ENCODE measurements at regions of chr14 and their contacts with region 1.

Region 1: GRCh38 chr14:54566410-54567223 is at the start of gene SAMD4A:
- DNase-seq: peak; percentile 84
- H3K4me3 ChIP-seq: peak within 1 kb of the TSS; percentile 41 to 87 (median 75)
- H3K27ac ChIP-seq: peak within 1 kb of the TSS; percentile 80
- H3K4me1 ChIP-seq: peaks cover 38% of the 10 kb centered on the region
- H3K27me3 ChIP-seq: no peaks in the 10 kb centered on the region
- CTCF ChIP-seq: peak in 1 of 2 donors; percentile 34
- POLR2A ChIP-seq: no peak
- total RNA-seq, gene SAMD4A: 88.8 and 95.3 TPM in 2 replicates

Region 2: GRCh38 chr14:54366736-54367735 is 199.6 kb before region 1 on chr14:
- CTCF ChIA-PET with region 1: interaction called, 6 read pairs
- POLR2A ChIA-PET with region 1: no interaction called
- dilution Hi-C with region 1: no loop called
- intact Hi-C with region 1: loop called (anchors 2 kb)
- DNase-seq: peak; percentile 69
- H3K4me3 ChIP-seq: no peak overlapping the region
- H3K27ac ChIP-seq: no peak overlapping the region
- H3K4me1 ChIP-seq: peaks cover 38% of the 10 kb centered on the region
- H3K27me3 ChIP-seq: peaks cover 0 to 1% of the 10 kb centered on the region in 2 experiments
- CTCF ChIP-seq: peak; percentile 59 to 67
- POLR2A ChIP-seq: no peak

Region 3: GRCh38 chr14:54555651-54556050 is 11.0 kb before region 1 on chr14:
- CTCF ChIA-PET with region 1: interaction called, 10 read pairs
- POLR2A ChIA-PET with region 1: no interaction called
- dilution Hi-C with region 1: no loop called
- intact Hi-C with region 1: no loop called
- DNase-seq: no peak
- H3K4me3 ChIP-seq: no peak overlapping the region
- H3K27ac ChIP-seq: no peak overlapping the region
- H3K4me1 ChIP-seq: no peaks in the 10 kb centered on the region
- H3K27me3 ChIP-seq: peaks cover 2 to 3% of the 10 kb centered on the region in 2 experiments
- CTCF ChIP-seq: peak; percentile 5 to 6
- POLR2A ChIP-seq: no peak

Region 4: GRCh38 chr14:54617467-54617866 is 50.9 kb after region 1 on chr14:
- CTCF ChIA-PET with region 1: no interaction called
- POLR2A ChIA-PET with region 1: no interaction called
- dilution Hi-C with region 1: no loop called
- intact Hi-C with region 1: no loop called
- DNase-seq: no peak
- H3K4me3 ChIP-seq: no peak overlapping the region
- H3K27ac ChIP-seq: no peak overlapping the region
- H3K4me1 ChIP-seq: peaks cover 10% of the 10 kb centered on the region
- H3K27me3 ChIP-seq: no peaks in the 10 kb centered on the region
- CTCF ChIP-seq: no peak
- POLR2A ChIP-seq: no peak

Region 5: GRCh38 chr14:54652188-54652587 is 85.6 kb after region 1 on chr14:
- CTCF ChIA-PET with region 1: interaction called, 42 read pairs
- POLR2A ChIA-PET with region 1: interaction called, 24 read pairs
- dilution Hi-C with region 1: no loop called
- intact Hi-C with region 1: loop called (anchors 1 kb)
- DNase-seq: peak; percentile 96
- H3K4me3 ChIP-seq: peak overlapping the region; percentile 29 to 80 (median 30)
- H3K27ac ChIP-seq: peak overlapping the region; percentile 100
- H3K4me1 ChIP-seq: peaks cover 62% of the 10 kb centered on the region
- H3K27me3 ChIP-seq: no peaks in the 10 kb centered on the region
- CTCF ChIP-seq: no peak
- POLR2A ChIP-seq: no peak

Region 6: GRCh38 chr14:54722781-54723432 is 156.3 kb after region 1 on chr14:
- CTCF ChIA-PET with region 1: interaction called, 104 read pairs
- POLR2A ChIA-PET with region 1: interaction called, 9 read pairs
- dilution Hi-C with region 1: no loop called
- intact Hi-C with region 1: loop called (anchors 1 kb)
- DNase-seq: peak; percentile 47
- H3K4me3 ChIP-seq: no peak overlapping the region
- H3K27ac ChIP-seq: no peak overlapping the region
- H3K4me1 ChIP-seq: peaks cover 6% of the 10 kb centered on the region
- H3K27me3 ChIP-seq: no peaks in the 10 kb centered on the region
- CTCF ChIP-seq: peak; percentile 24 to 30
- POLR2A ChIP-seq: no peak

Region 7: GRCh38 chr14:54782751-54783679 is 216.4 kb after region 1 on chr14:
- CTCF ChIA-PET with region 1: interaction called, 286 read pairs
- POLR2A ChIA-PET with region 1: no interaction called
- dilution Hi-C with region 1: no loop called
- intact Hi-C with region 1: no loop called
- DNase-seq: no peak
- H3K4me3 ChIP-seq: no peak overlapping the region
- H3K27ac ChIP-seq: no peak overlapping the region
- H3K4me1 ChIP-seq: no peaks in the 10 kb centered on the region
- H3K27me3 ChIP-seq: no peaks in the 10 kb centered on the region
- CTCF ChIP-seq: no peak
- POLR2A ChIP-seq: no peak

Region 8: GRCh38 chr14:54981698-54982097 is 415.1 kb after region 1 on chr14:
- CTCF ChIA-PET with region 1: interaction called, 10 read pairs
- POLR2A ChIA-PET with region 1: no interaction called
- dilution Hi-C with region 1: no loop called
- intact Hi-C with region 1: no loop called
- DNase-seq: peak; percentile 25
- H3K4me3 ChIP-seq: no peak overlapping the region
- H3K27ac ChIP-seq: no peak overlapping the region
- H3K4me1 ChIP-seq: peaks cover 4% of the 10 kb centered on the region
- H3K27me3 ChIP-seq: no peaks in the 10 kb centered on the region
- CTCF ChIP-seq: no peak
- POLR2A ChIP-seq: no peak